ENCODE measurements at regions of chr5 and their contacts with region 1.

Region 1: GRCh38 chr5:150458819-150459557 is 9.4 kb upstream of the RPS14 start:
- DNase-seq: peak; percentile 93
- H3K4me3 ChIP-seq: no peak overlapping the region; a peak in 2 of 4 replicates
- H3K27ac ChIP-seq: no peak overlapping the region
- H3K4me1 ChIP-seq: peaks cover 0 to 8% of the 10 kb centered on the region in 2 experiments; a peak in 2 of 4 replicates
- H3K27me3 ChIP-seq: no peaks in the 10 kb centered on the region
- CTCF ChIP-seq: peak; percentile 70
- EP300 ChIP-seq: no peak
- RAD21 ChIP-seq: peak; percentile 83

Region 2: GRCh38 chr5:150486402-150487198 is 27.6 kb after region 1 on chr5:
- CTCF ChIA-PET with region 1: interaction called, 14 read pairs
- POLR2A ChIA-PET with region 1: no interaction called
- DNase-seq: peak; percentile 87
- H3K4me3 ChIP-seq: peak overlapping the region; percentile 86 to 89
- H3K27ac ChIP-seq: peak overlapping the region; percentile 80 to 92
- H3K4me1 ChIP-seq: peaks cover 38 to 52% of the 10 kb centered on the region in 2 experiments
- H3K27me3 ChIP-seq: no peaks in the 10 kb centered on the region
- CTCF ChIP-seq: no peak
- EP300 ChIP-seq: no peak
- RAD21 ChIP-seq: no peak

Region 3: GRCh38 chr5:150517272-150518152 is 58.5 kb after region 1 on chr5:
- CTCF ChIA-PET with region 1: interaction called, 83 read pairs
- POLR2A ChIA-PET with region 1: no interaction called
- DNase-seq: peak; percentile 87
- H3K4me3 ChIP-seq: no peak overlapping the region
- H3K27ac ChIP-seq: peak overlapping the region; percentile 52 to 68
- H3K4me1 ChIP-seq: peaks cover 41 to 46% of the 10 kb centered on the region in 2 experiments; a peak in 3 of 4 replicates
- H3K27me3 ChIP-seq: no peaks in the 10 kb centered on the region
- CTCF ChIP-seq: no peak
- EP300 ChIP-seq: peak; percentile 59 to 95; a peak in 3 of 4 replicates
- RAD21 ChIP-seq: no peak; the same call in 1 of the 2 replicates

Region 4: GRCh38 chr5:150529555-150529954 is 70.6 kb after region 1 on chr5:
- CTCF ChIA-PET with region 1: interaction called, 83 read pairs
- POLR2A ChIA-PET with region 1: no interaction called
- DNase-seq: no peak
- H3K4me3 ChIP-seq: no peak overlapping the region
- H3K27ac ChIP-seq: no peak overlapping the region
- H3K4me1 ChIP-seq: no peaks in the 10 kb centered on the region
- H3K27me3 ChIP-seq: no peaks in the 10 kb centered on the region
- CTCF ChIP-seq: no peak
- EP300 ChIP-seq: no peak
- RAD21 ChIP-seq: no peak

Region 5: GRCh38 chr5:150846654-150847333 is 387.8 kb after region 1 on chr5:
- CTCF ChIA-PET with region 1: interaction called, 12 read pairs
- POLR2A ChIA-PET with region 1: no interaction called
- DNase-seq: peak; percentile 80
- H3K4me3 ChIP-seq: no peak overlapping the region
- H3K27ac ChIP-seq: no peak overlapping the region
- H3K4me1 ChIP-seq: no peaks in the 10 kb centered on the region; a peak in 1 of 4 replicates
- H3K27me3 ChIP-seq: no peaks in the 10 kb centered on the region
- CTCF ChIP-seq: peak; percentile 82
- EP300 ChIP-seq: no peak
- RAD21 ChIP-seq: peak; percentile 93